T-cell (primary cell): ENCODE measurements at regions of chr15 and their contacts with region 1.

Region 1: GRCh38 chr15:69013726-69014406 is 629 bp upstream of the NOX5 start:
- DNase-seq: no peak
- ATAC-seq: no peak
- H3K4me3 ChIP-seq: no peak overlapping the region
- H3K4me3 Mint-ChIP-seq: no peak overlapping the region
- H3K27ac ChIP-seq: no peak overlapping the region
- H3K27ac Mint-ChIP-seq: no peak overlapping the region
- H3K4me1 ChIP-seq: no peaks in the 10 kb centered on the region
- H3K4me1 Mint-ChIP-seq: no peaks in the 10 kb centered on the region
- H3K27me3 ChIP-seq: peaks cover 0 to 24% of the 10 kb centered on the region in 2 experiments
- H3K27me3 Mint-ChIP-seq: peaks cover 8 to 19% of the 10 kb centered on the region in 2 donors

Region 2: DNA sequence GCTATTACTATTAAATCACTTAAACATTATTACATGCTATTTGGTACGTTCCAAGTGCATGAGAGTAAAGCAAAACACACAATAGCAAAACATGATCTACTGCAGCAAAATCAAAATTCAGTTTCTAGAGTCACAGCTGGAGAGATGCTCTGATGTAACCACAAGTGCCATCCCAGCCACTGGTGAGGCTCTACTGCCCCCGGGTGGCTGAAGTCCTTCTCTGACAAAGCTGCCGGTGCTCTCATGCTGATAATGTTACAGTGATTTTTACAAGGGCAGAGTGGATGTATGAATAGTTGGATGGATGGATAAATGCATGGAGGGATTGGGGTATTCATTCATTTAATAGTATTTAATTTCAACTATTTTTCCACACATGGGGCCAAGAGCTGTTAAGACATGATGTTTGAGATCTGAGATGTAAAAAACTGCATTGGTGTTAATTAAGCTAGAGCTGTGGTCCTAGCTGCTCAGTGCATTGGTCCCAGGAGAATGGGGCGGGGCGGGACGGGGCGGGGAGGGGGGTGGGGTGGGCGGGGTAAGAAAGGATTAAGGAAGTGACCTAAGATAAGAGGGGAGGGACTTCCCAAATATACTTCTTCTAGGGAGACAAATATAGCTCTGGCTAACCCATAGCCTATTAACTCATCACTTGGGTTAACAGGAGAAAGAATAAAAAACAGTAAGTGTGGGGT is 88.9 kb before region 1 on chr15:
- CTCF ChIA-PET with region 1: no interaction called
- POLR2A ChIA-PET with region 1: interaction called in 1 of 2 experiments, 10 read pairs
- DNase-seq: peak; percentile 15 to 68 (median 51)
- ATAC-seq: peak in 3 of 4 experiments; percentile 56 to 74 (median 68)
- H3K4me3 ChIP-seq: no peak overlapping the region
- H3K4me3 Mint-ChIP-seq: no peak overlapping the region
- H3K27ac ChIP-seq: no peak overlapping the region
- H3K27ac Mint-ChIP-seq: no peak overlapping the region
- H3K4me1 ChIP-seq: no peaks in the 10 kb centered on the region
- H3K4me1 Mint-ChIP-seq: peaks cover 0 to 5% (median 0%) of the 10 kb centered on the region in 3 donors
- H3K27me3 ChIP-seq: peaks cover 0 to 3% of the 10 kb centered on the region in 2 experiments
- H3K27me3 Mint-ChIP-seq: peaks cover 11 to 25% of the 10 kb centered on the region in 2 donors

Region 3: DNA sequence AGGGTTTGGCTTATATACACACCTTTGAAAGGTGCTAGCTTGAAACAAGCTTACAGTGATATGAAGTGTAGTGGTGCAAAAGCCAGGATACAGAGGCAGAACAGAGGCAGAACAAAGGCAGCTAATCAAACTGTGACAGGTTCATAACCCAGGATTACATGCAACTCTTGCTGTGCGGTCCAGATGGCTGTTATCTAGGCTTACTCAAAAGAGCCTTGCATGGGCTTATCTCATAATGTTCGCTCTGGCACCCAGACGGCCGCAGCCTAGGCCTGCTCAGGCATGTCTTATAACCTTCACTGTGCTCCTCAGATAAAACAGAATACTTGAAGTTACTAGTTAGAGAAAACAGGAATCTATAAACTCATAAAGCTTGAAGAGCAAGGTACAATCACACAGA is 22.1 kb before region 1 on chr15:
- CTCF ChIA-PET with region 1: no interaction called
- POLR2A ChIA-PET with region 1: no interaction called
- DNase-seq: no peak
- ATAC-seq: no peak
- H3K4me3 ChIP-seq: no peak overlapping the region
- H3K4me3 Mint-ChIP-seq: no peak overlapping the region
- H3K27ac ChIP-seq: no peak overlapping the region
- H3K27ac Mint-ChIP-seq: no peak overlapping the region
- H3K4me1 ChIP-seq: no peaks in the 10 kb centered on the region
- H3K4me1 Mint-ChIP-seq: no peaks in the 10 kb centered on the region
- H3K27me3 ChIP-seq: peaks cover 0 to 7% of the 10 kb centered on the region in 2 experiments
- H3K27me3 Mint-ChIP-seq: peaks cover 7 to 11% of the 10 kb centered on the region in 2 donors